ENCODE measurements at regions of chr3 and their contacts with region 1.

Region 1: DNA sequence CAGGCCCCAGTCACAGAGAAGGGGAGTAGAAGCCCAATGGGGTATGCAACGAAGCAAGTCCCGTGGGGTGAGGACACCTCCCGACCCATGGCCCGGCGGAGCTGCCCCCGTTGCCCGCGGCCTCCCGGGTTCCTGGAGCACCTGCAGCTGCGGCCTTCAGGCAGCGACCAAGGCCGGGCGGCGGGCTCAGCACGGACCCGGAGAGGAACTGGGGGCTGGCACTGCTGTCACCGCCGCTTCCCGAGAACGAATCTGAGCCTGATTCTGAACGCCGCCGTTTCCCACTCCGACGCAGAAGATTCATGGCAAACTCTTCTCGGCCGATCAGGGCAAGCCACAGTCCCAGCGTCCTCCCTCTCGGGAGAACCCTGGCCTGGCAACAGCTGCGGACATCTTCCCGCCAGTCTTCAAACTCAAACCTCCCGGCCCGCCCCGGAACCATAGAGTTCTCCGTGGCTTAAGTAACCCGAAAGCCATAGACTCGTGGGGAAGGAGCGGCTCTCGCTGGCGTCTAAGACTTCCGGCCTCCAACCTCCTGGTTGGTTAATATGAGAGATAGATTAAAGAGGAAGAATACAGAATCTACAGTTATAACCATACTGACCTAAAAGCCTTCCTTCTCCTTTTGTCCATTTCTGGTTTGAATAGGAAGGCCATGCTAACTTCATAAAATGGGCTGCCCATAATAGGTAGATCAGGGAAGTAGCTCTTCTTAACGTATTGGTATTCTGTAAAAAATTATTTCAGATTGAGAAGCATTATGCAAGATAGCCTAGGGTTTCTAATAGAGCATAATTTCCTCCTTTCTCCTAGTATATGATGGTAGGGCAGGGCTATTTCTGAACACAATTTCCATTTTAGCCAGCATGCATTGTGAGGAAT is at the start of gene POLQ:
- DNase-seq: peak; percentile 74
- ATAC-seq: peak; percentile 91
- H3K4me3 Mint-ChIP-seq: peak within 1 kb of the TSS; percentile 90
- H3K27ac Mint-ChIP-seq: peak within 1 kb of the TSS; percentile 95
- H3K4me1 Mint-ChIP-seq: peaks cover 31% of the 10 kb centered on the region
- H3K27me3 Mint-ChIP-seq: no peaks in the 10 kb centered on the region
- CTCF ChIP-seq: no peak
- total RNA-seq, gene POLQ: 1.4 and 2.7 TPM in 2 replicates

Region 2: GRCh38 chr3:121362035-121362734 is 183.6 kb before region 1 on chr3:
- CTCF ChIA-PET with region 1: no interaction called
- POLR2A ChIA-PET with region 1: no interaction called
- intact Hi-C with region 1: no loop called
- DNase-seq: no peak
- ATAC-seq: no peak
- H3K4me3 Mint-ChIP-seq: no peak overlapping the region
- H3K27ac Mint-ChIP-seq: no peak overlapping the region
- H3K4me1 Mint-ChIP-seq: no peaks in the 10 kb centered on the region
- H3K27me3 Mint-ChIP-seq: no peaks in the 10 kb centered on the region
- CTCF ChIP-seq: no peak

Region 3: DNA sequence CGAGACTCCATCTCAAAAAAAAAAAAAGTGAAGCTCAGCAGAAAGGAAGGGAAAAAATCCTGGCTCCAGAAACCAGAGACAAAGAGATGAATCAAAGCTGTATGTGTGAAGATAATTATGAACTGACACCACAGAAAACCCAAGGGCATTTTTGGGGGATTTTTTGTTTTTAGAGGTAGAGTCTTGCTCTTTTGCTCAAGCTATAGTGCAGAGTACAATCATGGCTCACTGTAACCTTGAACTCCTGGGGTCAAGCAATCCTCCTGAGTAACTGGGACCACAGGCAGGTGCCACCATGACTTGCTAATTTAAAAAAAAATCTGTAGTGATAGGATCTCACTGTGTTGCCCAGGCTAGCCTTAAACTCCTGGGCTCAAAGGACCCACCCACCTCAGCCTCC is 92.1 kb after region 1 on chr3:
- CTCF ChIA-PET with region 1: no interaction called
- POLR2A ChIA-PET with region 1: no interaction called
- intact Hi-C with region 1: loop called (anchors 5 kb)
- DNase-seq: no peak
- ATAC-seq: peak; percentile 34
- H3K4me3 Mint-ChIP-seq: no peak overlapping the region
- H3K27ac Mint-ChIP-seq: peak overlapping the region; percentile 56
- H3K4me1 Mint-ChIP-seq: peaks cover 12% of the 10 kb centered on the region
- H3K27me3 Mint-ChIP-seq: no peaks in the 10 kb centered on the region
- CTCF ChIP-seq: no peak

Region 4: GRCh38 chr3:121844892-121845291 is 299.1 kb after region 1 on chr3:
- CTCF ChIA-PET with region 1: no interaction called
- POLR2A ChIA-PET with region 1: no interaction called
- intact Hi-C with region 1: no loop called
- DNase-seq: no peak
- ATAC-seq: no peak
- H3K4me3 Mint-ChIP-seq: no peak overlapping the region
- H3K27ac Mint-ChIP-seq: peak overlapping the region; percentile 10
- H3K4me1 Mint-ChIP-seq: peaks cover 36% of the 10 kb centered on the region
- H3K27me3 Mint-ChIP-seq: no peaks in the 10 kb centered on the region
- CTCF ChIP-seq: no peak

Region 5: DNA sequence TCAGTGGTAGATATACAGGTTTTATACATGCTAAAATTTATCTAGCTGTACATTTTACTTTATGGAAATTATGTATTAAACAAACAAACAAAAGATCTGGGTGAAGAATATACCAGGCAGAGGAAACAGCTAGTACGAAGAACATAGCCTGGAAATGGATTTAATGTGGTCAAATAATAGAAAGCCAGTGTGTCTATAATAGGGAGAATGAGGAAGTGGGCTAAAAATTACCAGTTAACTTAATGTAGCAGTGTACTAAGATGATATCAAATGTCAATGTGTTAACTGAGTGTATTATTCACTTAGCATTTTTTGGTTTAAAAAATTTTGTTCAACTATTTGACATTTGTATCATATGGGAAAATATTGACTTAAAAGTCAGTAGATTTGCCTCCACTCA is 325.6 kb after region 1 on chr3:
- CTCF ChIA-PET with region 1: no interaction called
- POLR2A ChIA-PET with region 1: no interaction called
- intact Hi-C with region 1: loop called (anchors 5 kb)
- DNase-seq: no peak
- ATAC-seq: peak; percentile 37
- H3K4me3 Mint-ChIP-seq: no peak overlapping the region
- H3K27ac Mint-ChIP-seq: peak overlapping the region; percentile 60
- H3K4me1 Mint-ChIP-seq: peaks cover 54% of the 10 kb centered on the region
- H3K27me3 Mint-ChIP-seq: no peaks in the 10 kb centered on the region
- CTCF ChIP-seq: no peak

Region 6: DNA sequence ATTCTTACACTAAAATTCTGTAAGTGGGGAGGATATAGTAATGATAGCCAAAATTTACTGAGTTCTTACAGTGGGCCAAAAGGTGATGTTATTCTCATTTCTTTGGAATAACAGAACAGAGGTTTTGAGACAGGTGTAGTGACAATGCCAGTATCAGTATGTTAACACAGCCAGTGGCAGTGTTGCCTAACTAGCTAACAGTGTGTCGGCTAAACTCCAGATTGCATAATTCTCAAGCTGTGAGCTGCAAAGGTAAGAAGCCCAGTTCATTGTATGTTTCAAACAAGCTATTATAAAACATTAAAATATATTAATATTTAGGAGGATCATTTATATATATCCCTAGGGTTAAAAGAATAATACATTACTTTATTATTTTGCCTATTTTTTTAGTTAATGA is 349.3 kb after region 1 on chr3:
- CTCF ChIA-PET with region 1: no interaction called
- POLR2A ChIA-PET with region 1: no interaction called
- intact Hi-C with region 1: no loop called
- DNase-seq: no peak
- ATAC-seq: no peak
- H3K4me3 Mint-ChIP-seq: no peak overlapping the region
- H3K27ac Mint-ChIP-seq: no peak overlapping the region
- H3K4me1 Mint-ChIP-seq: no peaks in the 10 kb centered on the region
- H3K27me3 Mint-ChIP-seq: no peaks in the 10 kb centered on the region
- CTCF ChIP-seq: no peak

Region 7: GRCh38 chr3:122299872-122300460 is 754.2 kb after region 1 on chr3:
- CTCF ChIA-PET with region 1: interaction called, 5 read pairs
- POLR2A ChIA-PET with region 1: no interaction called
- intact Hi-C with region 1: loop called (anchors 1 kb)
- DNase-seq: no peak
- ATAC-seq: no peak
- H3K4me3 Mint-ChIP-seq: no peak overlapping the region
- H3K27ac Mint-ChIP-seq: no peak overlapping the region
- H3K4me1 Mint-ChIP-seq: peaks cover 20% of the 10 kb centered on the region
- H3K27me3 Mint-ChIP-seq: no peaks in the 10 kb centered on the region
- CTCF ChIP-seq: no peak

Region 8: GRCh38 chr3:122514123-122515019 is 968.6 kb after region 1 on chr3 and contains the start of gene KPNA1:
- CTCF ChIA-PET with region 1: no interaction called
- POLR2A ChIA-PET with region 1: no interaction called
- intact Hi-C with region 1: loop called (anchors 2 kb)
- DNase-seq: peak; percentile 92
- ATAC-seq: peak; percentile 83
- H3K4me3 Mint-ChIP-seq: peak within 1 kb of the TSS; percentile 85
- H3K27ac Mint-ChIP-seq: peak within 1 kb of the TSS; percentile 82
- H3K4me1 Mint-ChIP-seq: peaks cover 42% of the 10 kb centered on the region
- H3K27me3 Mint-ChIP-seq: no peaks in the 10 kb centered on the region
- CTCF ChIP-seq: no peak
- total RNA-seq, gene KPNA1: 72.9 and 76.4 TPM in 2 replicates

Region 9: GRCh38 chr3:123028233-123028828 is 1482.5 kb after region 1 on chr3:
- CTCF ChIA-PET with region 1: interaction called, 31 read pairs
- POLR2A ChIA-PET with region 1: interaction called, 3 read pairs
- intact Hi-C with region 1: loop called (anchors 1 kb)
- DNase-seq: peak; percentile 19
- ATAC-seq: peak; percentile 50
- H3K4me3 Mint-ChIP-seq: peak overlapping the region; percentile 83
- H3K27ac Mint-ChIP-seq: no peak overlapping the region
- H3K4me1 Mint-ChIP-seq: peaks cover 19% of the 10 kb centered on the region
- H3K27me3 Mint-ChIP-seq: peaks cover 37% of the 10 kb centered on the region
- CTCF ChIP-seq: no peak